ENCODE measurements at regions of chr7 and their contacts with region 1.

Region 1: GRCh38 chr7:114922016-114922651 is at the start of gene MDFIC:
- DNase-seq: peak; percentile 76
- H3K4me3 Mint-ChIP-seq: peak within 1 kb of the TSS; percentile 98
- H3K27ac Mint-ChIP-seq: peak within 1 kb of the TSS; percentile 99
- H3K4me1 Mint-ChIP-seq: peaks cover 63% of the 10 kb centered on the region
- H3K27me3 Mint-ChIP-seq: no peaks in the 10 kb centered on the region
- total RNA-seq, gene MDFIC: 79.4 to 93.1 TPM

Region 2: DNA sequence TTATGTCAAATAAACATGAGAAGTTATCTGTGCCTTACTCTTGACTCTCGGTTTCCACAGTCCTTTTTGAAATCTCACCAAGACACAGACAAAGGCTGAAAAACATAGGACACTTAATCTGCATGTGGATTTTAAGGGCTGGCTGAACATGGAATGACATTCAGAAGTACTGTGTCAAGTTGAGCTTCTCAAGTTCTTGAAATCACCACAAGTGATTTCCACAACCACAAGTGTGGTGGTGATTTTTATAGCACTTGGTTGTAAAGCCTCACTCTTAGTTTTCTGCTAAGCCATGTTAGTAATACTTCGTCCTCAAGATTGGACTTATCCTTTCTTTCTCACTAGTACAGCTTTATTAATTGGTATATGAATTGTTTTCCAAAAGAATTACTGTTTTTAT is 477.9 kb before region 1 on chr7:
- CTCF ChIA-PET with region 1: no interaction called
- intact Hi-C with region 1: no loop called
- DNase-seq: no peak
- H3K4me3 Mint-ChIP-seq: no peak overlapping the region
- H3K27ac Mint-ChIP-seq: no peak overlapping the region
- H3K4me1 Mint-ChIP-seq: no peaks in the 10 kb centered on the region
- H3K27me3 Mint-ChIP-seq: no peaks in the 10 kb centered on the region

Region 3: GRCh38 chr7:114973147-114973546 is 51.0 kb after region 1 on chr7:
- CTCF ChIA-PET with region 1: no interaction called
- intact Hi-C with region 1: loop called (anchors 2 kb)
- DNase-seq: no peak
- H3K4me3 Mint-ChIP-seq: no peak overlapping the region
- H3K27ac Mint-ChIP-seq: no peak overlapping the region
- H3K4me1 Mint-ChIP-seq: peaks cover 67% of the 10 kb centered on the region
- H3K27me3 Mint-ChIP-seq: no peaks in the 10 kb centered on the region